ENCODE measurements at regions of chr9 and their contacts with region 1.

Region 1: DNA sequence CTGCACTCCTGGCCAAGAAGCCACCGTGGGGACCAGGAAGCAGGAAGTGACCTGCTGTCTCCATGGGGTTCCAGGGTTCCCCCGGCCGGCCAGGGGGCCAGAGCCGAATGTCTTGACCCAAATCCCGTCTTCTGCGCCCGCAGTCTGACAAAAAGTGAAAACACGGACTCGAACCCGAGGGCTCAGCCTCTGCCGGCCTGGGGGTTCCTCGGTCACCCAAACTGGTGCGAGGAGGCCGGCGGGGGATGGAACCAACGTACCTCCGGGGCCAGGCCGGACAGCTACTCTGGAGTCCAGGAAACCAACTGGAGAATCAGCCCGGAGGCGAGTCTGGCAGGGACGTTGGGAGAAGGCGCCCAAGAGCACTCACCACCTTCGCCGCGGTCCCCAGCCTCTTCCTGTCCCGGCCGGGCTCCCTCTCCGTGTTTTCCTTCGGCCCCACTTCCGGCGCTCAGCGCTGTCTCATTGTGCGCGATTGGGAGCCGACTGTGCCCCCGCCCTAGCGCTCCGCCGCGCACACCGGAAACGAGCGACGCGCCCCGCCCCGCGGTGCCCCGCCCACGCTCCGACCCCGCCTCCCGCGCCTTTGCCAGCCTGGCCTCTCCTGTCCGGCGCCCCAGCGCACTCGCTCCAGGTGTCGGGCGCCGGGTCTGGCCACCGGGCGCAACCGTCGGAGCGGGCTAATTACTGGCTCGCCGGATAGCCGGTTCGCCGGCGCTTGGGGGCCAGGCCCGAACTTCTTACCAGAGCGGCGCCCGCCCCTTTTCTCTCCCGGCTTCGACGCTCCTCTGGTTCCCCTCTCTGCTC is at the start of gene TUT7:
- DNase-seq: peak; percentile 97
- H3K4me3 Mint-ChIP-seq: peak within 1 kb of the TSS; percentile 98
- H3K27ac Mint-ChIP-seq: peak within 1 kb of the TSS; percentile 100
- H3K4me1 Mint-ChIP-seq: peaks cover 34% of the 10 kb centered on the region
- H3K27me3 Mint-ChIP-seq: no peaks in the 10 kb centered on the region
- total RNA-seq, gene TUT7: 50.7 to 56.8 TPM

Region 2: GRCh38 chr9:86098824-86099700 is 255.2 kb before region 1 on chr9 and contains the start of gene GOLM1:
- CTCF ChIA-PET with region 1: no interaction called
- POLR2A ChIA-PET with region 1: no interaction called
- intact Hi-C with region 1: loop called (anchors 5 kb)
- DNase-seq: peak; percentile 47
- H3K4me3 Mint-ChIP-seq: peak within 1 kb of the TSS; percentile 73
- H3K27ac Mint-ChIP-seq: no peak within 1 kb of the TSS
- H3K4me1 Mint-ChIP-seq: peaks cover 8% of the 10 kb centered on the region
- H3K27me3 Mint-ChIP-seq: peaks cover 38% of the 10 kb centered on the region
- total RNA-seq, gene GOLM1: 2.0 to 2.1 TPM

Region 3: DNA sequence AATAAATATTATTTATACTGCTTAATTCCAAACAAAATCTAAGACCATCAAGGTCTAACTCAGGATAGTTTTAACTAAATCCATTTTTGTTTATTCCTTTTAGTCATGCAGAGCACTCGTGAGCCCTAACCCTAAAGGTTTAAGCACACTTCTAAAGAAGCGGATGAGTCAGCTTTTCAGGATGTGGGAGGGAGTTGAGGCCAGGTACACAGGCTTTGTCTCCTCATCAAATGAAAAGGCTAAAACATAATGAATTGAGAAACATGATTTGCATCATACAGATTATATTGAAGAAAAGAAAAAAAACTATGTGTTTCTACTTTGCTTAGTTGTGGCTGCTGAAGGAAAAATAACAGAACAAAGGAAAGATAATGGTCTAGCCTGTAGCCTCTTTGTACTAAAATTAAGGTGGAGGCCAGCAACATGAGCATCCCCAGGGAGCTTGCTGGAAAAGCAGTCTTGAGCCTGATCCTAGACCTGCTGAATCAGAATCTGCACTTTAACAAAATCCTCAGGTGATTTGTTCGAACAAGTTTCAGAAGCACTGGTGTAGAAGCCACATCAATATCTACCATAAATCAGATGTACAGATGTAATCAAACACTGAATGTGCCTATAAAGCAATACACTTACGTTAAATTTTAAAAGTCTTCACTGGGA is 50.8 kb before region 1 on chr9:
- CTCF ChIA-PET with region 1: no interaction called
- POLR2A ChIA-PET with region 1: no interaction called
- intact Hi-C with region 1: loop called (anchors 1 kb)
- DNase-seq: peak; percentile 68
- H3K4me3 Mint-ChIP-seq: peak overlapping the region; percentile 23
- H3K27ac Mint-ChIP-seq: peak overlapping the region; percentile 90
- H3K4me1 Mint-ChIP-seq: peaks cover 38% of the 10 kb centered on the region
- H3K27me3 Mint-ChIP-seq: no peaks in the 10 kb centered on the region

Region 4: GRCh38 chr9:86405926-86406325 is 51.7 kb after region 1 on chr9:
- CTCF ChIA-PET with region 1: no interaction called
- POLR2A ChIA-PET with region 1: interaction called, 3 read pairs
- intact Hi-C with region 1: loop called (anchors 1 kb)
- DNase-seq: peak; percentile 57
- H3K4me3 Mint-ChIP-seq: peak overlapping the region; percentile 17
- H3K27ac Mint-ChIP-seq: peak overlapping the region; percentile 40
- H3K4me1 Mint-ChIP-seq: peaks cover 20% of the 10 kb centered on the region
- H3K27me3 Mint-ChIP-seq: peaks cover 21% of the 10 kb centered on the region

Region 5: GRCh38 chr9:86948074-86948929 is 594.1 kb after region 1 on chr9:
- CTCF ChIA-PET with region 1: no interaction called
- POLR2A ChIA-PET with region 1: no interaction called
- intact Hi-C with region 1: loop called (anchors 1 kb)
- DNase-seq: peak; percentile 83
- H3K4me3 Mint-ChIP-seq: peak overlapping the region; percentile 75
- H3K27ac Mint-ChIP-seq: no peak overlapping the region
- H3K4me1 Mint-ChIP-seq: peaks cover 11% of the 10 kb centered on the region
- H3K27me3 Mint-ChIP-seq: peaks cover 19% of the 10 kb centered on the region

Measured in activated CD4-positive, alpha-beta memory T cell treated with anti-CD3 and anti-CD28 coated beads for 36 hours (primary cell).